ENCODE measurements at regions of chr13 and their contacts with region 1.

Region 1: GRCh38 chr13:69648340-69649062 is 459.1 kb upstream of the ATXN8OS start:
- DNase-seq: no peak
- ATAC-seq: no peak
- H3K4me3 ChIP-seq: no peak overlapping the region
- H3K27ac ChIP-seq: no peak overlapping the region
- H3K4me1 ChIP-seq: no peaks in the 10 kb centered on the region
- H3K27me3 ChIP-seq: no peaks in the 10 kb centered on the region
- CTCF ChIP-seq: no peak

Region 2: GRCh38 chr13:69623973-69624372 is 24.5 kb before region 1 on chr13:
- intact Hi-C with region 1: no loop called
- DNase-seq: no peak
- ATAC-seq: no peak
- H3K4me3 ChIP-seq: no peak overlapping the region
- H3K27ac ChIP-seq: no peak overlapping the region
- H3K4me1 ChIP-seq: no peaks in the 10 kb centered on the region
- H3K27me3 ChIP-seq: no peaks in the 10 kb centered on the region
- CTCF ChIP-seq: no peak

Region 3: DNA sequence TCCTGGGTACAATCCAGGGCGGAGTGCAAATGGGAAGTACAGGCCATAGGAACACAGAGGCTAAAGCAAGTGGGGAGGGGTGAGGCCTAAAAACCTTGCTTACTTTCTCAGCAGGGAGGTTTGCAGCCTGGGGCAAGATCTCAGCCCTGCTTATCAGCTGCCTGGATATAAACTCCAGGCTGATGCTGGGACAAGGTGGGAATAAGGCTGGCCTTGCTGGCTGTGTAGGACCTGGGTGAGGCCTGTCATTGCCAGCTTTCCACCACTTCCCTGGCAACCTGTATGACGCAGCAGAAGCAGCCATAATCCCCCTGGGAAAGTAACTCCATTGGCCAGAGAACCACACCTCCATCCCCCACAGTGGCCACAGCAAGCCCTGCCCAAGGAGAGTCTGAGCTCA is 180.0 kb after region 1 on chr13:
- intact Hi-C with region 1: loop called in 1 of 10 experiments (anchors 5 kb)
- DNase-seq: no peak
- ATAC-seq: no peak
- H3K4me3 ChIP-seq: no peak overlapping the region
- H3K27ac ChIP-seq: no peak overlapping the region
- H3K4me1 ChIP-seq: no peaks in the 10 kb centered on the region
- H3K27me3 ChIP-seq: no peaks in the 10 kb centered on the region
- CTCF ChIP-seq: no peak

Measured in heart right ventricle (tissue), 16 donors.